CD8-positive, alpha-beta memory T cell (primary cell): ENCODE measurements at regions of chr16 and their contacts with region 1.

Region 1: GRCh38 chr16:4686497-4687210 is 6.7 kb upstream of the NUDT16L1 start:
- DNase-seq: no peak
- H3K4me3 ChIP-seq: no peak overlapping the region
- H3K4me3 Mint-ChIP-seq: no peak overlapping the region
- H3K27ac ChIP-seq: no peak overlapping the region
- H3K27ac Mint-ChIP-seq: peak overlapping the region in 2 of 8 donors; percentile 17 to 61
- H3K4me1 ChIP-seq: no peaks in the 10 kb centered on the region
- H3K4me1 Mint-ChIP-seq: peaks cover 0 to 6% (median 0%) of the 10 kb centered on the region in 3 donors
- H3K27me3 ChIP-seq: no peaks in the 10 kb centered on the region
- H3K27me3 Mint-ChIP-seq: no peaks in the 10 kb centered on the region

Region 2: GRCh38 chr16:4723071-4723767 is 36.6 kb after region 1 on chr16:
- CTCF ChIA-PET with region 1: no interaction called
- POLR2A ChIA-PET with region 1: no interaction called
- DNase-seq: no peak
- H3K4me3 ChIP-seq: no peak overlapping the region
- H3K4me3 Mint-ChIP-seq: no peak overlapping the region
- H3K27ac ChIP-seq: no peak overlapping the region
- H3K27ac Mint-ChIP-seq: peak overlapping the region in 1 of 8 donors; percentile 20
- H3K4me1 ChIP-seq: no peaks in the 10 kb centered on the region
- H3K4me1 Mint-ChIP-seq: peaks cover 0 to 1% (median 0%) of the 10 kb centered on the region in 3 donors
- H3K27me3 ChIP-seq: no peaks in the 10 kb centered on the region
- H3K27me3 Mint-ChIP-seq: no peaks in the 10 kb centered on the region

Region 3: GRCh38 chr16:4802659-4803287 is 116.1 kb after region 1 on chr16:
- CTCF ChIA-PET with region 1: no interaction called
- POLR2A ChIA-PET with region 1: interaction called, 13 read pairs
- DNase-seq: peak; percentile 86 to 93 (median 87)
- H3K4me3 ChIP-seq: peak overlapping the region; percentile 56
- H3K4me3 Mint-ChIP-seq: peak overlapping the region; percentile 82 to 95 (median 88)
- H3K27ac ChIP-seq: peak overlapping the region; percentile 67
- H3K27ac Mint-ChIP-seq: peak overlapping the region; percentile 36 to 86 (median 68)
- H3K4me1 ChIP-seq: peaks cover 16% of the 10 kb centered on the region
- H3K4me1 Mint-ChIP-seq: peaks cover 9 to 25% (median 10%) of the 10 kb centered on the region in 3 donors
- H3K27me3 ChIP-seq: no peaks in the 10 kb centered on the region
- H3K27me3 Mint-ChIP-seq: no peaks in the 10 kb centered on the region